Activated T-helper 1 cell treated with anti-CD3 and anti-CD28 coated beads, Interleukin-12 subunit alpha, Interleukin-12 subunit beta, Interleukin-2, Interleukin-4 antibody, amounts not matched to agents 30 ng/mL and 10 ng/mL and 1 ng/mL, durations not matched to agents 14 hours and 24 hours and 36 hours (primary cell): ENCODE measurements at regions of chr11 and their contacts with region 1.

Region 1: GRCh38 chr11:9573052-9573774 is at the start of gene WEE1:
- DNase-seq: peak; percentile 99
- H3K4me3 Mint-ChIP-seq: peak within 1 kb of the TSS; percentile 93
- H3K27ac Mint-ChIP-seq: peak within 1 kb of the TSS; percentile 88
- H3K4me1 Mint-ChIP-seq: peaks cover 42% of the 10 kb centered on the region
- H3K27me3 Mint-ChIP-seq: peaks cover 7% of the 10 kb centered on the region
- total RNA-seq, gene WEE1: 51.4 and 54.2 TPM in 2 replicates

Region 2: GRCh38 chr11:8688414-8689362 is 884.5 kb before region 1 on chr11:
- intact Hi-C with region 1: loop called (anchors 10 kb)
- DNase-seq: peak; percentile 82
- H3K4me3 Mint-ChIP-seq: peak overlapping the region; percentile 94
- H3K27ac Mint-ChIP-seq: peak overlapping the region; percentile 91
- H3K4me1 Mint-ChIP-seq: peaks cover 60% of the 10 kb centered on the region
- H3K27me3 Mint-ChIP-seq: no peaks in the 10 kb centered on the region

Region 3: GRCh38 chr11:9601037-9601875 is 28.0 kb after region 1 on chr11:
- intact Hi-C with region 1: loop called (anchors 1 kb)
- DNase-seq: peak; percentile 74
- H3K4me3 Mint-ChIP-seq: peak overlapping the region; percentile 71
- H3K27ac Mint-ChIP-seq: peak overlapping the region; percentile 90
- H3K4me1 Mint-ChIP-seq: peaks cover 34% of the 10 kb centered on the region
- H3K27me3 Mint-ChIP-seq: peaks cover 4% of the 10 kb centered on the region

Region 4: GRCh38 chr11:9748361-9748970 is 175.3 kb after region 1 on chr11:
- intact Hi-C with region 1: loop called (anchors 2 kb)
- DNase-seq: peak; percentile 66
- H3K4me3 Mint-ChIP-seq: no peak overlapping the region
- H3K27ac Mint-ChIP-seq: no peak overlapping the region
- H3K4me1 Mint-ChIP-seq: peaks cover 34% of the 10 kb centered on the region
- H3K27me3 Mint-ChIP-seq: peaks cover 2% of the 10 kb centered on the region

Region 5: DNA sequence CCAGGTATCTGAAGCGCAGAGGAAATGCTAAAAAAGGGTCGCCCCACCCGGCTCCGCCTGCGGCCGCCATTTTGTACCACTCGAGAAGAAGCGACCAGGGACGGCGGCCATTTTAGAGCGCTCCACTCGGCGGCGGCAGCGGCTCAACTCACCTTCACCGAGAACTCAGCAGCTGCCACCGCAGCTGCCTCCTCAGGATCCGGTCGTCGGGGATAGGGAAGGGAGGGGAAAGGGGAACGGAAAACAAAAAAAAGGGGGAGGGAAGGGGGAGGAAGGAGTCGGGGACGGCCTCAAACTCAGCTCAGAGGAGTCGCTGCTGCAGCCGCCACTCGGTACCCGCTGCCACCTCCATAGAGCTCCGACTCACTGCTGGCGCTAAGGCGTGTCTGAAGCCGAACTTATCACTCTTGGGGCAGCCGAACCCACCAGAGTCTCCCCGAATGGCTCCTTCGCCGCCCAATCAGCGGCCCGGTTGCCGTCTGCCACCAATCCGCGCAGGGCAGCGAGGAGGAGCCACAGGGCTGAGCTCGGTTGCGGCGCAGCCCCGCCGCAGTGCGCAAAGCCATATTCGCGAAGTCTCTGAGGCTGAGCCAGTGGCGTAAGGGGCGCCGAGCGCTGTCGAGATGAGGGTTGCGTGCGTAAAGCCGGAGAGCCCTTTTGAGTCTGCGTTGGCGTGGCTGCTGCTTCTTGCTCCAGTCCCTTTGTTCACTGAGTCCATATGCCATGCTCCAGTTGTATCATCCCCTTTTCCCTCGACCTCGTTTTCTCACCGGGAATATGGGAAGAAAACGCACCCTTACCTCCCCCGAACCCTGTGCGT is 1235.5 kb after region 1 on chr11 and contains the start of gene EIF4G2:
- intact Hi-C with region 1: loop called (anchors 10 kb)
- DNase-seq: peak; percentile 98
- H3K4me3 Mint-ChIP-seq: peak within 1 kb of the TSS; percentile 95
- H3K27ac Mint-ChIP-seq: peak within 1 kb of the TSS; percentile 98
- H3K4me1 Mint-ChIP-seq: peaks cover 43% of the 10 kb centered on the region
- H3K27me3 Mint-ChIP-seq: no peaks in the 10 kb centered on the region
- total RNA-seq, gene EIF4G2: 1,084 and 1,108 TPM in 2 replicates